ENCODE measurements at regions of chr1 and their contacts with region 1.

Region 1: GRCh38 chr1:220294846-220295301 is 22.6 kb upstream of the RAB3GAP2 start:
- DNase-seq: no peak
- H3K4me3 ChIP-seq: no peak overlapping the region
- H3K27ac ChIP-seq: no peak overlapping the region
- H3K4me1 ChIP-seq: no peaks in the 10 kb centered on the region
- H3K27me3 ChIP-seq: no peaks in the 10 kb centered on the region
- CTCF ChIP-seq: no peak

Region 2: DNA sequence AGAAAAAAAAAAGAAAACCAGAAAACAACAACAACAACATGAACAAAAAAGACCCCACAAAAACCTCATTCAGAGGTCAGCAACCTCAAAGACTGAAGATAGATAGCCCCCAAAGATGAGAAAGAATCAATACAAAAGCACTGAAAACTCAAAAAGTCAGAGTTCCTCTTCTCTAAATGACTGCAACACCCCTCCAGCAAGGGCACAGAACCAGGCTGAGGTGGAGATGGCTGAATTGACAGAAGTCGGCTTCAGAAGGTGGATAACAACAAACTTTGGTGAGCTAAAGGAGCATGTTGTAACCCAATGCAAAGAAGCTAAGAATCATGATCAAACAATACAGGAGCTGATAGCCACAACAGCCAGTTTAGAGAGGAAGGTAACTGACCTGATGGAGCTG is 39.7 kb before region 1 on chr1:
- CTCF ChIA-PET with region 1: no interaction called
- POLR2A ChIA-PET with region 1: interaction called, 11 read pairs
- intact Hi-C with region 1: no loop called
- DNase-seq: no peak
- H3K4me3 ChIP-seq: no peak overlapping the region
- H3K27ac ChIP-seq: no peak overlapping the region
- H3K4me1 ChIP-seq: no peaks in the 10 kb centered on the region
- H3K27me3 ChIP-seq: no peaks in the 10 kb centered on the region
- CTCF ChIP-seq: no peak

Region 3: GRCh38 chr1:220370031-220370700 is 75.3 kb after region 1 on chr1:
- CTCF ChIA-PET with region 1: interaction called, 5 read pairs
- POLR2A ChIA-PET with region 1: no interaction called
- intact Hi-C with region 1: loop called (anchors 1 kb)
- DNase-seq: peak; percentile 77 to 95
- H3K4me3 ChIP-seq: peak overlapping the region; percentile 10; the same call in 1 of the 2 replicates
- H3K27ac ChIP-seq: peak overlapping the region; percentile 94
- H3K4me1 ChIP-seq: peaks cover 54% of the 10 kb centered on the region
- H3K27me3 ChIP-seq: no peaks in the 10 kb centered on the region
- CTCF ChIP-seq: no peak

Region 4: DNA sequence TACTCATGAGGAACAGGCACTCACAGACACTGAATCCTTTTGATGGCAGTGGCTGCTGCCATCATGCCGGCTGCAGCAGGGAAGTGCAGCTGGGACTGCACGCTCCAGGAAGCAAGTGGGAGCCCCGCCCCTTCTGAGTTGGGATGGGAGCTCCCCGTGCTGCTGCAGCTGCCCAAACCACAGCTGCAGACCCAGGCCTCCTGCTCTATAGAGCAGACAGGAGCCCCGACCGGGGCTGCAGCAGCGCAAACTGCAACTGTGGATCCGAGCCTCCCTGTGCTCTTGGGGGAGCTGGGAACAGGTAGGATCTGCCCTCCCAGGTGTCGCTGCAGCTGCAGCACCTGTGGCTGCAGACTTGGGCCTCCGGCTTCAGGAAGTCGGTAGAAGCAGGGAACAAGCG is 167.9 kb after region 1 on chr1:
- CTCF ChIA-PET with region 1: interaction called, 9 read pairs
- POLR2A ChIA-PET with region 1: no interaction called
- intact Hi-C with region 1: loop called (anchors 1 kb)
- DNase-seq: peak in 1 of 2 experiments; percentile 67
- H3K4me3 ChIP-seq: no peak overlapping the region
- H3K27ac ChIP-seq: no peak overlapping the region
- H3K4me1 ChIP-seq: no peaks in the 10 kb centered on the region
- H3K27me3 ChIP-seq: no peaks in the 10 kb centered on the region
- CTCF ChIP-seq: no peak; the same call in 1 of the 2 replicates

Region 5: GRCh38 chr1:220680085-220680687 is 385.3 kb after region 1 on chr1:
- CTCF ChIA-PET with region 1: interaction called, 3 read pairs
- POLR2A ChIA-PET with region 1: no interaction called
- intact Hi-C with region 1: loop called (anchors 1 kb)
- DNase-seq: peak in 1 of 2 experiments; percentile 21
- H3K4me3 ChIP-seq: no peak overlapping the region
- H3K27ac ChIP-seq: no peak overlapping the region
- H3K4me1 ChIP-seq: no peaks in the 10 kb centered on the region
- H3K27me3 ChIP-seq: no peaks in the 10 kb centered on the region
- CTCF ChIP-seq: peak; percentile 85